A549 (cell line): ENCODE measurements at regions of chr12 and their contacts with region 1.

Region 1: DNA sequence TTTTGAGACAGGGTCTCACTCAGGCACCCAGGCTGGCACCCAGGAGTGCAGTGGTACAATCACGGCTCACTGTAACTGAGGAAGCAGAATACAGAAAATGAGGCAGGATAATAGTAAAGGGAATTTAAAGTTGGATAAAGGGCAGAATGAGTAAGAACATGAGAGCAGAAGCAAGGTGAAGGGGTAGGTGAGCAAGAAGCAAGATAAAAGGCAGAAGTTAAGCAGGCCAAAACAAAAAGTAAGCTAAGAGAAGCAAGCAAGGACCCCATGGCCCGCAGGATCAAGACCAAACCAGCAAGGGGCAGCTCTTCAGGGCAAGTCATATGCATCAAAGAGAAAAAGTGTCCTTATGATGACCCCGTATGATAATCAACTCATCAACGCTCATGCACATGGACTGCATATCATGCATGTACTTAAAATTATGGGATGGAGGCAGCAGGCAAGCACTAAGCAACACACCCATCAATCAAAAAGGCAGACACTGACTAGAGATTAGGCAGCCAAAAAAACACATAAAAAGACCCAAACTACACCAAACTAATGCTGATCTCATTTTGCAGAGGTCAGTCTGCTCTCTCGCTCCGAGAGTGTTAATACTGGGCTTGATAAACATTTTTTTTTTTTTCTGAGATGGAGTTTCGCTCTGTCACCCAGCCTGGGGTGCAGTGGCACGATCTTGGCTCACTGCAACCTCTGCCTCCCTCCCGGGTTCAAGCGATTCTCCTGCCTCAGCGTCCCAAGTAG is 11.6 kb downstream of the TIMELESS start:
- DNase-seq: no peak
- ATAC-seq: no peak
- H3K4me3 ChIP-seq: no peak overlapping the region
- H3K27ac ChIP-seq: no peak overlapping the region
- H3K4me1 ChIP-seq: no peaks in the 10 kb centered on the region
- CTCF ChIP-seq: no peak
- EP300 ChIP-seq: no peak
- POLR2A ChIP-seq: no peak
- RAD21 ChIP-seq: no peak

Region 2: GRCh38 chr12:56351325-56351724 is 86.3 kb before region 1 on chr12:
- CTCF ChIA-PET with region 1: no interaction called
- POLR2A ChIA-PET with region 1: no interaction called
- DNase-seq: no peak
- ATAC-seq: no peak
- H3K4me3 ChIP-seq: no peak overlapping the region
- H3K27ac ChIP-seq: no peak overlapping the region
- H3K4me1 ChIP-seq: no peaks in the 10 kb centered on the region
- CTCF ChIP-seq: no peak
- EP300 ChIP-seq: no peak
- POLR2A ChIP-seq: no peak
- RAD21 ChIP-seq: no peak

Region 3: DNA sequence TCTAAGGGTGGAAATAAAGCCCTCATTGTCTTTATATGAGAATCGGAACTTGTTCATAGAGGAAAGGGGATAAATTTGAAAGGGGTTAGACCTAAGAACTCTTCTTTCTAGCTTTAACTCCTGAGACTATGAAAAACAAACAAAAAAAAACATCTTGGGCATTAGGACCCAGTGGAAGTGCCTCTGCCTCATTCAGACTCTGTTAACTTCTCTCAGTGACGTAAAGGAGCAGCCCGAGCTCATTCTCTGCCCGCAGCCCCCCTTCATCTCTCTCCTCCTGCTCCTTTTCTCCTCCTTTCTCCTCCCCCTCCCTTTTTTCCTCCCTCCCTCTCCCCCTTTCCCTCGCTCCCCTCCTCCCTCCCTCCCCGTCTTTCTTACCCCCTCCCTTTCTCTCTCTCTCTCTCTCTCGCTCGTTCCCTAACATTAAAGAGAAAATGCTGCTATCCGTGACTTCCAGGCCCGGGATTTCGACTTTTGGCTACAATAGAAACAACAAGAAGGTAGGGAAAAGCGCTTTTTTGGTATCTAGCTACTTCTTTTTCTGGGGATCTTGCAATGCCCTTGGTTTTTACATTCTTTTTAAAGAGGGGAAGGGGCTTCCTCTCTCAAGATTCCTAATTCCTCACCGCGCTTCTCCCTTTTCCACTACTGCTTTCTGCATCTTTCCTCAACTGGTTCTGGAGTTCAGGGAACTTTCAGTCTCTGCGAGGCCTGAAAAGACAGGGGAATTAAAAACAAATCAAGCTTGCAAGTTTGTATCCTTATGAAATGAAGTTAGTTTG is 84.2 kb after region 1 on chr12 and contains the start of gene RBMS2:
- CTCF ChIA-PET with region 1: no interaction called
- POLR2A ChIA-PET with region 1: interaction called, 11 read pairs
- DNase-seq: peak; percentile 81 to 96
- ATAC-seq: peak; percentile 91 to 95
- H3K4me3 ChIP-seq: peak within 1 kb of the TSS; percentile 66
- H3K27ac ChIP-seq: peak within 1 kb of the TSS; percentile 87 to 89
- H3K4me1 ChIP-seq: peaks cover 70% of the 10 kb centered on the region
- CTCF ChIP-seq: no peak
- EP300 ChIP-seq: no peak
- POLR2A ChIP-seq: no peak
- RAD21 ChIP-seq: no peak
- polyA plus RNA-seq, gene RBMS2: 46.4 and 61.6 TPM in 2 replicates